ENCODE measurements at regions of chr2 and their contacts with region 1.

Region 1: DNA sequence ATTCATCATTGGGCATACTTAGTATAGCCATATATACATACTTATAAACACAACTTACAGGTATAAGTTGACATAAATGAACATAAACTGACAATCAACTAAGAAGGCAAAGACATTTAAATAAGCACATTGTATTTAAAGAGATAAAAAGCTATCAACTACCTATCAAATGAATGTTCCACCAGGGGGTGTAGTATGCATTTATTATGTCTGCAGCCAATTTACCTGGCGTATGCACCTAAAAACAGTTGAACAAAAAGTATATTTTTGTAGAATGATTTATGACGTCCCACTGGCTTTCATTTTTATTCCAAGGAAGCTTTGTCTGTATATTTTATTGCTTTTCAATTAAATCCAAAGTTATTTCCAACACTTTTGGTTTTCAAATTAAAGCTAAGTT is 323.5 kb downstream of the AFF3 start:
- DNase-seq: no peak
- H3K4me3 Mint-ChIP-seq: no peak overlapping the region
- H3K27ac Mint-ChIP-seq: no peak overlapping the region
- H3K4me1 Mint-ChIP-seq: no peaks in the 10 kb centered on the region
- H3K27me3 Mint-ChIP-seq: no peaks in the 10 kb centered on the region

Region 2: DNA sequence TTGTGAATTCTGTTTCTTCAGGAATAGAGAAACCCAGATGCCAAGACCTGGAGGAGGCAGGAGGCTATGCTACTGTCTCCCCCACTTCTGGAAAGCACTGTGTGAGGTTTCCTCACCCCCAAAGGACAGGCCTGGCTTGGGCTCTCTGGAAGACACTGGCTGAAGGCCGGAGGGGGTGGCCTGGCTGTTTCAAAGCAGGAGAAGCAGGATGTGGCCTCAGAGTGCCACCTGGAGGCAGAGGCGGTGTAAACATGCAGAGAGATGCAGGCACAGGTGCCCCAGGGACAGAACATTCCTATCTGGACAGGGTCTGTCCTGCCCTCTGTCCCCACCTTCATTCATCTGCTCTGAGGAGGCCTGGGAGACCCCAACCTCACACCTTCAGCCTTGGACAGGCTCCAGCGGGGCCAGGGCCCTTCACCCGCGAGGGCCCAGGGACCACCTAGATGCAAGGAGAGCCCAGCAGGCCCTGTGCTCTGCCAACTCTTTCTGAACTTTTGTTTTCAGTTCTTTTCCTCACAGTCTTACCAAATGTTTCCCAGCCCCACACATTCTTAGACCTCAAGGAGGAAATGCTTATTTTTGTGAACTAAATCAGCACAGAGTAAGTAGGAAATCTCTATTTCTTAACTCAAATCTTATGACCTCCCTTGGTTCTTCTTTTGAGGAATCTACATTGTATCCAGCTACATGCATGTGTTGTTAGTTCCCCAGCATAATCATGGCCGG is 424.2 kb after region 1 on chr2:
- CTCF ChIA-PET with region 1: interaction called, 16 read pairs
- intact Hi-C with region 1: loop called (anchors 1 kb)
- DNase-seq: peak; percentile 75
- H3K4me3 Mint-ChIP-seq: no peak overlapping the region
- H3K27ac Mint-ChIP-seq: no peak overlapping the region
- H3K4me1 Mint-ChIP-seq: peaks cover 2% of the 10 kb centered on the region
- H3K27me3 Mint-ChIP-seq: peaks cover 9% of the 10 kb centered on the region